Activated B cell treated with CpG ODN at 0.5 μM for 24 hours (primary cell): ENCODE measurements at regions of chr12 and their contacts with region 1.

Region 1: DNA sequence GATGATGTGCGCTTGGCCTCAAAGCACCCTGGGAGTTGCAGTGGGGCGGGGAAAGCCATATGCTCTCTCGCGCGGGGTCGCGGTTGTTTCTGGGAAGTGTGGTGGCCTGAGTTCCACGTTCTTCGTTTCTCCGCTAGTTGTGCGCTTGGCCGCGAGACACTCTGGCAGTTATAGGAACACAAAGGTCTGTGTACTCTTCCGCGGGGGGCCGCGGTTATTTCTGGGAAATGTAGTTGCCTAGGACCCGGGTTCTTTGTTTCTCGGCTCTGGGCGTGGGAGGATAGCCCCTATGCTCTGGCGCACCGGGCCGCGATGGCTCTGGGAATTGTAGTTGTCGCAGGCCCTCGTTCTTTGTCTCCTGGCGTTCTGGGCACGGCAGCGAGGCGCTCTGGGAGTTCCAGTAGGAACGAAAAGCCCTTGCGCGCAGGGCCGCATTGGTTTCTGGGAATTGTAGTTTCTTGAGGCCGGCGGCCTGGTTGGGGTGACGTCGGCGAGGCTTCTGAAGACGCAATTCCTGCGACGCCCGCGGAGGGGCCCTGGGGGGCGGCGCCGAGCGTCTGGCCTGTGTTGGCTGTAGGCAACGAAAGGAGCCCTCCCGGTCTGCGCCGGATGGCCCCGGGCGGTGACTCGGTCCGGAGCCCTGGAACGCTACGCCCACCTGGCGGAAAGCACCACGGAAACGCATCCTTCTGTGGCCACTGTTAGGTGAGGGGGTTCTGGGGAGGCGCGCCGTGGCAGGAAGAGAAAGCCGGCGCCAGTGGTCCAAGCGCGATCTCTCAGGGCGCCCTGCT is at the start of gene ZNF140:
- DNase-seq: peak; percentile 90
- ATAC-seq: peak; percentile 65
- H3K4me3 Mint-ChIP-seq: no peak within 1 kb of the TSS
- H3K27ac Mint-ChIP-seq: no peak within 1 kb of the TSS
- H3K4me1 Mint-ChIP-seq: peaks cover 12% of the 10 kb centered on the region
- H3K27me3 Mint-ChIP-seq: no peaks in the 10 kb centered on the region
- CTCF ChIP-seq: no peak
- total RNA-seq, gene ZNF140: 20.6 and 21.9 TPM in 2 replicates

Region 2: GRCh38 chr12:132554842-132555630 is 525.5 kb before region 1 on chr12:
- CTCF ChIA-PET with region 1: no interaction called
- POLR2A ChIA-PET with region 1: no interaction called
- intact Hi-C with region 1: no loop called
- DNase-seq: no peak
- ATAC-seq: no peak
- H3K4me3 Mint-ChIP-seq: no peak overlapping the region
- H3K27ac Mint-ChIP-seq: no peak overlapping the region
- H3K4me1 Mint-ChIP-seq: peaks cover 15% of the 10 kb centered on the region
- H3K27me3 Mint-ChIP-seq: no peaks in the 10 kb centered on the region
- CTCF ChIP-seq: no peak

Region 3: DNA sequence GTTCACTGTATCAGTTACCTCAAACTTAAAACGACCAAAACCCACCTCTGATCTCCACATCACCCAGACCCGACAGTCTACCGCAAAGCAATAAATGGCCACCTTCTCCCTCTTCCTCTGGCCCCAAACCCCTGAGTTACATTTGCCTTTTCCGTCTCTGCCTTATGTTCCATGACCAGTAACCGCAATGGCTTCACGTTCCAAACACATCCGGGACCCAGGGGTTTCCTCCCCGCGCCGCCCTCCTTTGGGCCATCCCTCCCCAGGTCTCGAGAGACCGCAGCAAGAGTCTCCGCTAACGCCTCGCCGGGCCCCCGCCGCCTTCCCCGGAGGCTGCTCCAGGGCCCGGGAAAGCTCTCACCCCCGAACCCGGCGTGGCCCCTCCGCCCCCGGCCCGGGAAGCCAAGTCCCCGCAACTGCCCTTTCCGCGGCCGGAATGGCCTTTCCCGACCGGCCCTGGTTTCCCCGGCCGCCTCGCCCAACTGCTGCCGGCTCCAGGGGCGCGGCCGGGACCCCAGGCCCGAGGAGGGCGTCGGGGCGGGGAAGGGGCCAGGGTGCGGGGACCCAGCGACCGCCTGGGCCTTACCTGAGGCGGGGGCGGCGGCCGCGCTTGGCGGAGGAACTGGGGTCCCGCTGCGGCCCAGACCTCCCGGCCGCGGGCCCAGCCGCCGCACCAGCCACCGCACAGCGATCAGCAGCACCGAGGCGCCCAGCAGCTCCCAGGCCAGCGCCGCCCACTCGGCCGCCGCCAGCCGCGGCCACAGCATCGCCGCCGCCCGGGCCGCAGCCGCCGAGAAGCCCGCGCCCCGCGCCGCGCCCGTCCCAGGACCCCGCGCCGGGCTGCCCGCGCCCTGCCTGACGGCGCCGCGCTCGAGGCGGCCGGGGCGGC is 319.3 kb before region 1 on chr12 and contains the start of gene ANKLE2:
- CTCF ChIA-PET with region 1: no interaction called
- POLR2A ChIA-PET with region 1: no interaction called
- intact Hi-C with region 1: loop called (anchors 1 kb)
- DNase-seq: peak; percentile 53
- ATAC-seq: peak; percentile 56
- H3K4me3 Mint-ChIP-seq: peak within 1 kb of the TSS; percentile 98
- H3K27ac Mint-ChIP-seq: peak within 1 kb of the TSS; percentile 96
- H3K4me1 Mint-ChIP-seq: peaks cover 60% of the 10 kb centered on the region
- H3K27me3 Mint-ChIP-seq: no peaks in the 10 kb centered on the region
- CTCF ChIP-seq: no peak
- total RNA-seq, gene ANKLE2: 117 and 136 TPM in 2 replicates

Region 4: GRCh38 chr12:132828706-132829534 is 251.6 kb before region 1 on chr12 and contains the start of gene GOLGA3:
- CTCF ChIA-PET with region 1: no interaction called
- POLR2A ChIA-PET with region 1: interaction called, 5 read pairs
- intact Hi-C with region 1: loop called (anchors 1 kb)
- DNase-seq: peak; percentile 95
- ATAC-seq: peak; percentile 92
- H3K4me3 Mint-ChIP-seq: peak within 1 kb of the TSS; percentile 96
- H3K27ac Mint-ChIP-seq: peak within 1 kb of the TSS; percentile 100
- H3K4me1 Mint-ChIP-seq: peaks cover 50% of the 10 kb centered on the region
- H3K27me3 Mint-ChIP-seq: no peaks in the 10 kb centered on the region
- CTCF ChIP-seq: no peak
- total RNA-seq, gene GOLGA3: 51.3 and 52.4 TPM in 2 replicates

Region 5: DNA sequence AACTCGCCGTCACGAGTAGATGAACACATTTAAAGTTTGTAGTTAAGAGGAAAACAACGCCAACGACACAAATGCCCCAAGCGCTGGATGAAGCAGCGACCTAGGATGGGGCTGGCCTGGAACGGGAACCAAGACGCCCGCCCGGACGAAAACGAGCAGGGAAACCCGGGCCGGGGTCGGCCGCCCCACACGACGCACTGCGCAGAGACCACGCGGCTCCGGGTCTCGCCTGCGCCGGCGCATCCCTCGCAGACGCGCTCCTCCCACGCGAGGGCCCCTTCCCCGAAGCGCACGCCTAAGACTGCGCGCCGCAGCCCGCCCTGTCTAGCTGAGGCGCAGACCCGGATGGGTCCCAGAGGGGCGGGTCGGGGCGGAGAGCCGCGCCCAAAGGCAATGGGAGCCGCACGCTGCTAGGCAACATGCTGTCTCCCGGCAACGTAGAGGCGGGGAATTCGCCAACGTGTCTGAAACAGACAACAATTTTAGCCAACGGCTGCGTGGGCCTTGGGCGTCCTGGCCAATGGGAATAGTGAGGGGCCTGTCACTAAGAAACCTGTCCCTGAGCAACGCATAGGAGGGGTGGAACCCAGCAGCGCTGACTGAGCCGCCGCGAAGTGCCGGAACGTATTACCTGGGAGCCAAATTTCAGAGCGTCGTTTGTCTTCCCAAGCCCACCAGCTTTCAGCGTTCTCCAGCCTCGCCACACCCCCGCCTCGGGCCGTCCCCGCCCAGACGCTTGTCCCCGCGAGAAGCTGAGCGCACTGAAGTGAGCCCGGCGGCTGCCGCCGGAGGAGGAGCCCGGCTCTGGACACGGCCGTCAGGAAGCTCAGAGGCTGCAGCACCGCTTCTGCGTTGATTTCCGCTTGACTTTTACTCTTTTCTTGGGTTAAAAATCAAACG is 172.2 kb before region 1 on chr12:
- CTCF ChIA-PET with region 1: no interaction called
- POLR2A ChIA-PET with region 1: interaction called, 14 read pairs
- intact Hi-C with region 1: loop called (anchors 1 kb)
- DNase-seq: peak; percentile 91
- ATAC-seq: peak; percentile 90
- H3K4me3 Mint-ChIP-seq: peak overlapping the region; percentile 94
- H3K27ac Mint-ChIP-seq: peak overlapping the region; percentile 96
- H3K4me1 Mint-ChIP-seq: peaks cover 13% of the 10 kb centered on the region
- H3K27me3 Mint-ChIP-seq: peaks cover 2% of the 10 kb centered on the region
- CTCF ChIP-seq: no peak

Region 6: GRCh38 chr12:132986001-132986912 is 94.3 kb before region 1 on chr12 and contains the start of gene ZNF26:
- CTCF ChIA-PET with region 1: no interaction called
- POLR2A ChIA-PET with region 1: interaction called, 21 read pairs
- intact Hi-C with region 1: loop called (anchors 1 kb)
- DNase-seq: peak; percentile 80
- ATAC-seq: peak; percentile 93
- H3K4me3 Mint-ChIP-seq: peak within 1 kb of the TSS; percentile 95
- H3K27ac Mint-ChIP-seq: peak within 1 kb of the TSS; percentile 94
- H3K4me1 Mint-ChIP-seq: peaks cover 23% of the 10 kb centered on the region
- H3K27me3 Mint-ChIP-seq: no peaks in the 10 kb centered on the region
- CTCF ChIP-seq: no peak
- total RNA-seq, gene ZNF26: 20.8 and 24.9 TPM in 2 replicates

Region 7: GRCh38 chr12:133130038-133130807 is 49.7 kb after region 1 on chr12 and contains the starts of genes ZNF10 and ZNF891:
- CTCF ChIA-PET with region 1: no interaction called
- POLR2A ChIA-PET with region 1: interaction called, 62 read pairs
- intact Hi-C with region 1: loop called (anchors 1 kb)
- DNase-seq: peak; percentile 99
- ATAC-seq: peak; percentile 86
- H3K4me3 Mint-ChIP-seq: peak within 1 kb of the TSS; percentile 95
- H3K27ac Mint-ChIP-seq: peak within 1 kb of the TSS; percentile 98
- H3K4me1 Mint-ChIP-seq: peaks cover 21% of the 10 kb centered on the region
- H3K27me3 Mint-ChIP-seq: no peaks in the 10 kb centered on the region
- CTCF ChIP-seq: no peak
- total RNA-seq, gene ZNF10: 8.4 and 10.9 TPM in 2 replicates
- total RNA-seq, gene ZNF891: 2.9 and 4.0 TPM in 2 replicates

Region 8: DNA sequence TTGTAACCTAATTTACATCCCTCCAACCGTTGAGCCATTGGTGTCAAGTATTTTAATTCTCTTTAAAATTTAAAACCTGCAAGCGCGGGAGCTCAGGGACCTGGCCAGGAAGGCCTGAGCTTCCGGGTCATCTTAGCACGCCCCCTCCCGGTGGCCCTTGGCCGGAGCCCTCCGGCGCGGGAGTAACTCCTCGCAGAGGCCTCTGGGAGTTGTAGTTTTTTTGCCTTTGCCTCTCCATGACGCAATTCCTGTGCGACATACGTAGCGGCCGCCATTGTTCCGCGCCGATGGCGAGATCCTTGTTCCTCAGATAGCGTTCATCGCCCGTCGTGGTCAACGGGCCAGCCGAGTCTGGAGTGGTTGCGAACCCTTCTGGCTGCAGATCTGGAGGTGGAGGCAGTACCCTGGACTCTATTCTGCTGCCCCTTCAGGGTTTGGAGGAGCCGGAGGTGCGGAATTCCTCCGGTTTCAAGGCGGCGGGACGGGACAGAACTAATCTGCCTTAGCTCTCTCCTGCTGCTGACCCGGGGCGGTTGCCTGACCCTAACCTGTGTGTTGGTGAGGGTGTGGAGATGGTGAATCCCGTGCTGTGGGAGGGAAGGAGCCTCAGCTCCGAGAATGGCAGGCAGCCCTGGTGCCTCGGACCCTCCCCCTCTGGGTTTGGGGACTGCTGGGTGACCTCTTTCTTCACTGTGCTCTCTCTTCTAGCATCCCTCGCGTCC is 100.8 kb after region 1 on chr12 and contains the start of gene ZNF268:
- CTCF ChIA-PET with region 1: interaction called, 11 read pairs
- POLR2A ChIA-PET with region 1: interaction called, 38 read pairs
- intact Hi-C with region 1: loop called (anchors 1 kb)
- DNase-seq: peak; percentile 86
- ATAC-seq: peak; percentile 97
- H3K4me3 Mint-ChIP-seq: peak within 1 kb of the TSS; percentile 94
- H3K27ac Mint-ChIP-seq: peak within 1 kb of the TSS; percentile 89
- H3K4me1 Mint-ChIP-seq: peaks cover 20% of the 10 kb centered on the region
- H3K27me3 Mint-ChIP-seq: no peaks in the 10 kb centered on the region
- CTCF ChIP-seq: no peak
- total RNA-seq, gene ZNF268: 29.1 and 29.3 TPM in 2 replicates